ENCODE measurements at regions of chr22 and their contacts with region 1.

Region 1: DNA sequence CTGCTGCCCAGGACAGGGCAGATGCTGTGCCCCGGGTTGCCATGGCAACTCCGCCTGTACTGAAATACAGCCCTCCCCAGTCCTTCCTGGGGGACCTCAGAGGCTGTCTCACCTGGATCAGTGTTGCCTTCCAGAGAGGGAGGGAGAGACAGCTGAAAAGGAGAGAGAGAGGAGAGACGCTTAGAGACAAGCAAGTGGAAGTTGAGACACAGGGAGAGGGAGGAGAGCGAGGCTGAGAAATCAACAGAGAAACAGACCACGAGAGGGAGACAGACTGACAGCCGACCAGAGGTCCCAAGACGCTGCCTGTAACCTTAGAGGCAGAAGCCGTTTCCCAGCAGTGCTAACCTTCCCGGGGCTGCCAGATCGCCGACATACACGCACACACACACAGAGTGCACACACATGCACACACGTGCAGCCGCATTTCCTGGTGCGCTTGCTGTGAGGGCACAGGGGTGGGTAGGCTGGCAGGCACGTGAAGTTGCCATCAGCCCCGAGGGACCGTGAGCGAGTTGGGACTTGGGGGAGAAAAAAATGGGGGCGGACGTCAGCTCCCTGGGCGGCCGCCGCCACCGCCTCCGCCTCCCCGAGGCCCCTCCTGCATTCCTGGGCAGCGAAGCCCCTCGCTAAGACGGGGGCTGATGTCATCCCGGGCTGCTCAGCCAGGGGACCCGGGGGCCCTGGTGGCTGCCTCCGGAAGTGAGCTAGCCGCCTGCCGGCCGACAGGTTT is 88.6 kb upstream of the CRYBB3 start:
- DNase-seq: peak; percentile 70
- ATAC-seq: peak; percentile 90
- H3K4me3 Mint-ChIP-seq: peak overlapping the region; percentile 71
- H3K27ac Mint-ChIP-seq: peak overlapping the region; percentile 16
- H3K4me1 Mint-ChIP-seq: peaks cover 20% of the 10 kb centered on the region
- H3K27me3 Mint-ChIP-seq: no peaks in the 10 kb centered on the region

Region 2: DNA sequence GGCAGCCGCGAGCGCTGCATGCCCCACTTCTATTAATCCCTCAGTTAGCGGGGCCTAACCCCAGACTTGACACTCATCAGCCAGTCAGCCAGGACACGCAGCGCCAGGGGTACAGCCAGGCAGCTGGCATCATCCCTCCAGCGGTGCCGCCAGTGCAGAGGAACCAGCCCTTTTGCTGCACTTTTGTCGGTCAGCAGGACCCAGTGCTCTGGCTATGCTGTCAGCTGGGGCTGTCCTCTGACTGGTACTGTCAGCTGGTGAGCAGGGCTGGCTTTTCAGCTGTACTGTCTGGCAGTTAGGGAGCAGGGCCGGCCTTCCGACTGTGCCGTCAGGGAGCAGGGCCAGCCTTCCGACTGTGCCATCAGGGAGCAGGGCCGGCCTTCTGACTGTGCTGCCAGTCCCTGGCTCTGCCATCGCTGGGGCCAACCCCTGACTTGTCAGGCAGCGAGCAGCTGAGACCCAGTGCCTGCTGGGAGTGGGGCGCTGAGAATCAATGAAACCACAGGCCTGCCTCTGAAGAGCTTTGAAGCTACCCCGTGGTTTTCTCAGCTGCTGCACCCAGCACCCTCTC is 43.1 kb before region 1 on chr22:
- CTCF ChIA-PET with region 1: interaction called, 17 read pairs
- POLR2A ChIA-PET with region 1: interaction called, 5 read pairs
- DNase-seq: peak; percentile 93
- ATAC-seq: peak; percentile 89
- H3K4me3 Mint-ChIP-seq: peak overlapping the region; percentile 80
- H3K27ac Mint-ChIP-seq: peak overlapping the region; percentile 95
- H3K4me1 Mint-ChIP-seq: peaks cover 92% of the 10 kb centered on the region
- H3K27me3 Mint-ChIP-seq: no peaks in the 10 kb centered on the region

Region 3: DNA sequence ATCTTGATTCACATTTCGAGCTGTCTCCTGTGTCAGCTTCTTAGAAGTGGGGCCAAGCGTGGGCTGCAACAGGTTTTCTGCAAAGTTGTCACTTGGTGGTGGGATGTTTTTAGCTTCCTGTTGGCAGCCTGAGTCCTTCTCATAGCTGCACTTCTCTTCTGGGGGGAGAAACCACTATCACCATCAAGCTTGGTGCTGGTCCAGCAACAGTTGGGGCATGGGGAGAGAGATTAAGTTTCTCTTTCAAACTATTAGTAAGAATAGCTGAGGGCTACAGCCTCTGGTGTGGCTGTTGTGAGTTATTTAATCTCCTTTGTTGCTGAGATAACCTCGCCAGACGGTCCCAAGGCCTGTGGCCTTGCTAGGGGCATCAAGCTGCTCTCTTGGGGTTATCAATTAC is 34.7 kb before region 1 on chr22:
- CTCF ChIA-PET with region 1: interaction called, 17 read pairs
- POLR2A ChIA-PET with region 1: no interaction called
- DNase-seq: peak; percentile 45
- ATAC-seq: peak; percentile 67
- H3K4me3 Mint-ChIP-seq: peak overlapping the region; percentile 60
- H3K27ac Mint-ChIP-seq: peak overlapping the region; percentile 82
- H3K4me1 Mint-ChIP-seq: peaks cover 63% of the 10 kb centered on the region
- H3K27me3 Mint-ChIP-seq: no peaks in the 10 kb centered on the region

Region 4: GRCh38 chr22:25081409-25081824 is 29.6 kb before region 1 on chr22:
- CTCF ChIA-PET with region 1: interaction called, 16 read pairs
- POLR2A ChIA-PET with region 1: no interaction called
- DNase-seq: peak; percentile 74
- ATAC-seq: peak; percentile 63
- H3K4me3 Mint-ChIP-seq: no peak overlapping the region
- H3K27ac Mint-ChIP-seq: no peak overlapping the region
- H3K4me1 Mint-ChIP-seq: peaks cover 65% of the 10 kb centered on the region
- H3K27me3 Mint-ChIP-seq: no peaks in the 10 kb centered on the region

Region 5: DNA sequence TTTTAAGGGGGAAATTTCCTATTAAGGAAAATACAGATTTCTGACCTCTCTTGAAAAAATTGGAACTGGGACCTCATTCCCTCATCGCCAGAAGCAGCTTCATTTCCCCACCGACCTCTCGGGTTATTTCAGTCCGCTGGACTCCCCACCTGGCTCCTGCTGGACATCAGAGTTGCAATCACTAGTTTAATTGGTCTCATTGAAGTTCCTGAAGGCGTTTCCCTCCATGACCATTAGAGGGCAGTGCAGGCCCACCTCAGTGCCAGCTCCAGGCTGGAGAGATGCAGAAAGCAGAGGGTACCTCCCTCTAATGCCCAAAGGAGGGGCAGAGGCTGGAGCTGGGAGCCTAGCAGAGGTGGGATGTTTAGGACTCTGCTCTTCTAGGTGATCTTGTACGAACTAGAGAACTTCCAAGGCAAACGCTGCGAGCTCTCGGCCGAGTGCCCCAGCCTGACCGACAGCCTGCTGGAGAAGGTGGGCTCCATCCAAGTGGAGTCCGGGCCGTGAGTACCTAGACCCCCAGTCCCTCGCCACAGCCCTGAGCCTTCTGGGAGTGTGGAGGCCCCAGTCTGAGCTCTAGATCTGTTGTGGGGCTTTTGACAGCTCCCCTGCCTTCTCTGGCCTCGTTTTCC is 91.4 kb after region 1 on chr22:
- CTCF ChIA-PET with region 1: no interaction called
- POLR2A ChIA-PET with region 1: no interaction called
- DNase-seq: peak; percentile 70
- ATAC-seq: peak; percentile 68
- H3K4me3 Mint-ChIP-seq: no peak overlapping the region
- H3K27ac Mint-ChIP-seq: no peak overlapping the region
- H3K4me1 Mint-ChIP-seq: peaks cover 19% of the 10 kb centered on the region
- H3K27me3 Mint-ChIP-seq: no peaks in the 10 kb centered on the region